Right cardiac atrium (tissue), 5 donors: ENCODE measurements at regions of chr6 and their contacts with region 1.

Region 1: DNA sequence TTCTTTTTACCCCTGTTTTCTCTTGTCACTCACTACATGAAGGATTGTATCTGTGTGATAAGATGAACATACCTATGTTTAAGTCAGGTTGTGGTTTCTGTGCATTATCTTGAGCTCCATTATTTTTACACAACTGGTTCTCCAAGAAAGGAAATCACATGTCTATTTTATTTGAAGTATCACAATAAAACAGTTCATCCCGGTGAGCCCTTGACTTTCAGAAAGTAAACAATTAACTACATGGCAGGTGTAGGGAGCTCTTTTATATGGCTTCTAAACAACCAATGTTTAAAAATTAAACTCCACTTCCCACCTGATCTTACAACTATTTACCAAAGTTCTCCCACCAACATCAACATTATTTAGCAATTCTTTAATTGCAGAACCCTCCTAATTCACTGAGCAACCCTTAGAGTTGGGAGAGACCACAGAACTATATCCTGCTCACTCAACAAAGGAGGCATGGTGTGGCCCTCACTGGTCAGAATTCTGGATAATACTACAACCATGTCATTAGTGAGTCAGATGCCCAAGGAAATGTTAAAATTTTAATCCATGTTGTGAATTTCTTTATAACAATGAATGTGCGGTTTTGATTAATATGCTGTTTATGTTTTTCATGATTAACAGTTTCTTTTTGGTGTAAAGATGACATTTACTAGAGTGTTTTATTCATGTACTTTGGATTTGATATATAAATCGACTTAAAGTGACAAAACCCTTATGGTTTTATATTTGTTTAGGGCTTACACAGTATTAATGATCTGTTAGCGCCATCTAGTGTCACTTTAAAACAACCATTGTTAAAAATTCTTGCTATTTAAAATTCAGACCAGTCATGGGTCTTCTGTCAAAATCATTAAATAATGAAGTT is 50.0 kb upstream of the SCGN start:
- DNase-seq: no peak
- ATAC-seq: no peak
- H3K4me3 ChIP-seq: no peak overlapping the region
- H3K27ac ChIP-seq: no peak overlapping the region
- H3K4me1 ChIP-seq: no peaks in the 10 kb centered on the region
- H3K27me3 ChIP-seq: no peaks in the 10 kb centered on the region

Region 2: DNA sequence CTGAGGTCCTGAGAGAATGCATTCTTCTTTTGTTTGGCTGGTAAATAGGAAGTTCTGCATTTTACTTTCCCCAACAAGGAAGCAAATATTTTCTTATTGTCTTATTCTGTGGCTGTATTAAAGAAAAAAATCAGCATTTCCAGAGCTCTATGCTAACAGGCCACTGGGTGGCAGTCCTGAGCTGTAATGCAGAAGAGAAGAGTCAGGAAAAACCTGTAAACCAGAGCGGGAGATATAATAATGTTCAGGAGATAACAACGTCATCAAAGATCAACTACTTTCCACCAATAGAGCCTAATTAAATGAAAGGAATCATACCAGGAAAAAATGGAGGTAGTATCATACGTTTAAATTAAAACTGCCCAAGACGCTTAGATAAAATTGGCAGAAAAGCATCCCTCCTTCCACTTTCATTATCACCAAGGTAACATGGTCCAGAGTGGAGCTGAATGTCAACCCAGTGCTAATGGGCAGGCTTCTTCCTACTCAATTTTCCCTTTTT is 378.5 kb before region 1 on chr6:
- intact Hi-C with region 1: loop called in 1 of 4 experiments (anchors 10 kb)
- DNase-seq: peak; percentile 75 to 80 (median 75)
- ATAC-seq: peak; percentile 69 to 76
- H3K4me3 ChIP-seq: peak overlapping the region; percentile 23
- H3K27ac ChIP-seq: no peak overlapping the region
- H3K4me1 ChIP-seq: no peaks in the 10 kb centered on the region
- H3K27me3 ChIP-seq: no peaks in the 10 kb centered on the region

Region 3: GRCh38 chr6:25263657-25264056 is 338.4 kb before region 1 on chr6:
- intact Hi-C with region 1: loop called in 1 of 4 experiments (anchors 5 kb)
- DNase-seq: no peak
- ATAC-seq: no peak
- H3K4me3 ChIP-seq: no peak overlapping the region
- H3K27ac ChIP-seq: no peak overlapping the region
- H3K4me1 ChIP-seq: no peaks in the 10 kb centered on the region
- H3K27me3 ChIP-seq: no peaks in the 10 kb centered on the region